ENCODE measurements at regions of chr17 and their contacts with region 1.

Region 1: GRCh38 chr17:27473748-27474609 is 17.7 kb downstream of the KSR1 start:
- DNase-seq: peak; percentile 93
- H3K4me3 Mint-ChIP-seq: peak overlapping the region; percentile 42
- H3K27ac Mint-ChIP-seq: peak overlapping the region; percentile 98
- H3K4me1 Mint-ChIP-seq: peaks cover 94% of the 10 kb centered on the region
- H3K27me3 Mint-ChIP-seq: no peaks in the 10 kb centered on the region

Region 2: GRCh38 chr17:27236717-27237315 is 237.2 kb before region 1 on chr17:
- CTCF ChIA-PET with region 1: interaction called, 4 read pairs
- POLR2A ChIA-PET with region 1: no interaction called
- intact Hi-C with region 1: loop called (anchors 10 kb)
- DNase-seq: peak; percentile 82
- H3K4me3 Mint-ChIP-seq: no peak overlapping the region
- H3K27ac Mint-ChIP-seq: no peak overlapping the region
- H3K4me1 Mint-ChIP-seq: peaks cover 15% of the 10 kb centered on the region
- H3K27me3 Mint-ChIP-seq: peaks cover 4% of the 10 kb centered on the region

Region 3: GRCh38 chr17:27353461-27354050 is 120.4 kb before region 1 on chr17:
- CTCF ChIA-PET with region 1: no interaction called
- POLR2A ChIA-PET with region 1: no interaction called
- intact Hi-C with region 1: loop called (anchors 5 kb)
- DNase-seq: peak; percentile 93
- H3K4me3 Mint-ChIP-seq: peak overlapping the region; percentile 78
- H3K27ac Mint-ChIP-seq: peak overlapping the region; percentile 86
- H3K4me1 Mint-ChIP-seq: peaks cover 22% of the 10 kb centered on the region
- H3K27me3 Mint-ChIP-seq: no peaks in the 10 kb centered on the region

Region 4: DNA sequence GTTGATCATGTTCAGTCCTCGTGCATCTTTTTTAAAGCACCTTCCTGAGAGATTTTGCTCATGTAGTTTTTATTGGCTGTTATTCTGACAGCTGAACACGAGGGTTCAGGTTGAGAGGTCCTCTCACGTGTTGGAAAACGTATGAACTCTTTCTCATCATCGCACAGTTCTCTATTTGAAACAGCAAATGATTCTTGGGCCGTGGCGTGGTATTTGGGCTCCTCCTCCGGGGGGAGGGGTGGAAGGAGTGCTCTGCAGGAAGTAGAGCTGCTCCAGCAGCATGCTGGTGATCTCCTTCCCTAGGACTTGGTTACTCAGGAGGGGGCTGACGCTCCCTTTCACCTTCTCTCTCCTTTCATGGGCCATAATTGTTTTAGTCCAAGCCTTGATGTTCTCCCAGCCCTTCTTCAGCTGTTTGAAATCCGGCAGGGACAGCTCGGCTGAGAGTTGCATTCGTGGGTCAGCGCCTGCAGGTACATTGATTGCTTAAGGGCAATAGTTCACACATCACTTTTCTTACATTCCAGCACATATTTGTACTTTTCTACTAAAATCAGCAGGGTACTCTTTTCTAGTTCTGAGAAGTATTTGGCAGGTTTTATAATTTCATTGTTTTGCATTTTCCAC is 52.7 kb after region 1 on chr17:
- CTCF ChIA-PET with region 1: no interaction called
- POLR2A ChIA-PET with region 1: interaction called, 3 read pairs
- intact Hi-C with region 1: loop called (anchors 10 kb)
- DNase-seq: peak; percentile 78
- H3K4me3 Mint-ChIP-seq: no peak overlapping the region
- H3K27ac Mint-ChIP-seq: no peak overlapping the region
- H3K4me1 Mint-ChIP-seq: peaks cover 70% of the 10 kb centered on the region
- H3K27me3 Mint-ChIP-seq: no peaks in the 10 kb centered on the region

Region 5: DNA sequence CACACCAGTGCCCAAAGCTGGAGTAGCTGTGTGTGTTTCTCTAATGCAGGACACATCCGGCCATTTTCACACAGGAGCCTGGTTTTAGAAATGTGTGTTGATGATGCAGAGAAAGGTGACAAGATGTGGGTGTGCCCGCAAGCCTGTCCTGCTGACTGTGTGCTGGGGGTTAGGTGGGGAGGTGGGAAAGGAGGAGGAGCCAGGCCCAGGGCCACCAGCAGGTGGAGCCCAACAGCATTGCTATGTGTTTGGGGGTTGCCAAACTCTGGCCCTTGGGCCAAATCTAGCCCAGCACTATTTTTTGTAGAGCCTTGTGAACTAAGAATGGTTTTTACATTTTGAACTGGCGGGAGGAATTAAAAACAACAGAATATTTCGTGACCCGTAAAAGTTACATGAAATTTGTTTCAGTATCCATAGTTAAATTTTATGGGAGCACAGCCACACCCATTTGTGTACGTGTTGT is 95.3 kb after region 1 on chr17:
- CTCF ChIA-PET with region 1: no interaction called
- POLR2A ChIA-PET with region 1: interaction called, 3 read pairs
- intact Hi-C with region 1: loop called (anchors 1 kb)
- DNase-seq: peak; percentile 85
- H3K4me3 Mint-ChIP-seq: no peak overlapping the region
- H3K27ac Mint-ChIP-seq: no peak overlapping the region
- H3K4me1 Mint-ChIP-seq: peaks cover 71% of the 10 kb centered on the region
- H3K27me3 Mint-ChIP-seq: no peaks in the 10 kb centered on the region